Breast epithelium (tissue), 4 donors: ENCODE measurements at regions of chrX and their contacts with region 1.

Region 1: DNA sequence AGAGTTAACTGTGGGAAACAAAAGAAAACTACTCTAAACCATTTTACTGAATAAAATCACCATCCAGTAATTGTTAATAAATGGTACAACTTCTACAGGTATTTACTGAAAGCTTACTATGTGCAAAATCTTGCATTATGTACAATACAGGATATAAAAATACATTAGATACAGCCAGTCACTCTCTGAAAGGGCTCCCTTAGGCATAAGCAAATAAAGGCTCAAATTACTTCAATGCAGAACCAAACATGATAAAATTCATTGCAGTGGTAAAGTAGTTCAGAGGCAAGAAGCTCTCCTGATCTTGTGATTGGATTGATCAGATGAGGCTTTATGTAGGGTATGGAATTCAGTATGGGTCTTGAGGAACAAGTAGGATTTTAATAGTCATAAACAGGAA is 100.2 kb downstream of the KLHL13 start:
- DNase-seq: no peak
- H3K4me3 ChIP-seq: no peak overlapping the region
- H3K27ac ChIP-seq: no peak overlapping the region
- H3K4me1 ChIP-seq: no peaks in the 10 kb centered on the region
- H3K27me3 ChIP-seq: no peaks in the 10 kb centered on the region
- CTCF ChIP-seq: no peak
- POLR2A ChIP-seq: no peak

Region 2: GRCh38 chrX:117407449-117408170 is 608.8 kb before region 1 on chrX:
- intact Hi-C with region 1: loop called (anchors 5 kb)
- DNase-seq: no peak
- H3K4me3 ChIP-seq: no peak overlapping the region
- H3K27ac ChIP-seq: no peak overlapping the region
- H3K4me1 ChIP-seq: no peaks in the 10 kb centered on the region
- H3K27me3 ChIP-seq: no peaks in the 10 kb centered on the region
- CTCF ChIP-seq: no peak
- POLR2A ChIP-seq: no peak